Aorta (tissue), 5 donors: ENCODE measurements at regions of chr6 and their contacts with region 1.

Region 1: GRCh38 chr6:90285611-90286381 is 10.8 kb downstream of the BACH2 start:
- DNase-seq: peak; percentile 90 to 92
- ATAC-seq: peak; percentile 95
- H3K4me3 ChIP-seq: no peak overlapping the region
- H3K27ac ChIP-seq: no peak overlapping the region
- H3K4me1 ChIP-seq: peaks cover 3% of the 10 kb centered on the region in 2 donors
- H3K27me3 ChIP-seq: no peaks in the 10 kb centered on the region

Region 2: DNA sequence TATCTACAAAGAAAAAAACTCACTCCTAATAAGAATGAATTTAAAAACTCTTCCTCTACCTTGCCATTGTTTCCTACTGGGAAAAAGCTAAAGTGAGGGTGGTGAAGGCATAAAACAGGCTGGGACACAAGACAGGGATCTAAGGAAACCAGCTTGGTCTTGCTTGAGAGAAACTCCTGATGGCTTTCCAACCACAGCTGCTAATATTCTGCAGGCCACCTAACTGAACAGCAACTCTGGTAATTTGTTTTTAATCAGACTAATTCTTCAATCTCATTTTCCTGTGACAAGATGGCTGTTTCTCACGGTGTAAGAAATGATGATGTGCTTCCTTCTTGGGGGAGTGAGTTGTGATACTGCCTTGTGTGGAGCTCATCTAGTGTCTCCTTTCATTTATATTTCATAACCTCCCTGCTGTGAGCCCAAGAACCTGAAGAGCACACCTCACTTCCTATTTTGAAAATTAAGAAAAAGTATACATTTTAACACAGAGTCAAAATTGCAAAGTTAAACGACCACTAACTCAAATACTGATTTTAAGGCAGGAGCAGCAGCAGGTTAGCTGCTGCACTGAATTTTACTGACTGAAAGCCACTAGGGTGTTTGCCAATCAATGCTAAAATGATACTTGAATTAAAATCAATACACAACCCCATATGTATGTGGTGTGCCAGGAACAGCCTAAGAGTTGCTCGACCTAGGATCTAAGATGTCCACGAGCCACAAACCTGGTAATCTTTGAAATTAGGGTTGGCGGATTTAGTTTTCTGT is 47.1 kb before region 1 on chr6:
- intact Hi-C with region 1: loop called in 1 of 2 experiments (anchors 5 kb)
- DNase-seq: no peak
- ATAC-seq: no peak
- H3K4me3 ChIP-seq: no peak overlapping the region
- H3K27ac ChIP-seq: no peak overlapping the region
- H3K4me1 ChIP-seq: no peaks in the 10 kb centered on the region
- H3K27me3 ChIP-seq: no peaks in the 10 kb centered on the region

Region 3: DNA sequence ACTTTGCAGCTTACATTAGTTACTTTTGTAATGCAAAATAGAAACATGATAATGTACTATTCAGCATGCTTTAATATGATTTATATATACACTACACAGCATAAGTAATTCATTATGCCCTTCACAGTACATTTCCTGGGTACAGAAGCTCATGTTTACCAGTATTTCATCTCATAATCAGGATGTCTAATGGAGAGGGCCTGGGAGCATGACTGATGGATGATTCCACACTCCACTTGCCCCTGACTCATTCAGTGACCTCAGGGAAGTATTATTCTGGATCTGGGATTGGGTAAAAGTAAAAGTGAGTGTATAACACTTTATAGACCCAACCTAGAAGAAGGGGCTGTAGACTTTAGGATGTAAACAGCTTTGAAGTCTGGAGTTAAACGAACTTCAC is 42.2 kb after region 1 on chr6:
- intact Hi-C with region 1: no loop called
- DNase-seq: no peak
- ATAC-seq: no peak
- H3K4me3 ChIP-seq: no peak overlapping the region
- H3K27ac ChIP-seq: no peak overlapping the region
- H3K4me1 ChIP-seq: no peaks in the 10 kb centered on the region
- H3K27me3 ChIP-seq: no peaks in the 10 kb centered on the region

Region 4: DNA sequence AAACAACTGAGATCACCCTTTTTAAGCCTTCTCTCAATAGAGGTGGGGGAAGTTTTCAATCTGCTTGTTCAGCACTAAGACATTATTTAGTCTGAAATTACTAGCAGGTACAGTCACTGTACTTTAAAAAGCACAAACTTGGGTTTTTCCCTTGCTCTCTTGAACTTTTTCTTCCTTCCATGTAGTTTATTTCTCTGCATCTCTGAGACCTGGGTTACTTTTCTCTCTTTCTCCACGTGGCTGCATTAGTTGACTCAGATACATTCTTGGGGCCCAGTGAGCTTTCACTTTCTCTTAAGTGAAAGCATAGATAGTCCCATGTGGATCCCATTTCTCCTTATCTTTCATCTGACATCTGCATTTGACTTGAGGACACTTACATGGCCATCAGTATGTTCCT is 734.9 kb after region 1 on chr6:
- intact Hi-C with region 1: no loop called
- DNase-seq: no peak
- ATAC-seq: no peak
- H3K4me3 ChIP-seq: no peak overlapping the region
- H3K27ac ChIP-seq: no peak overlapping the region
- H3K4me1 ChIP-seq: no peaks in the 10 kb centered on the region
- H3K27me3 ChIP-seq: no peaks in the 10 kb centered on the region